Cardiac septum (tissue), 1 donor: ENCODE measurements at regions of chr2 and their contacts with region 1.

Region 1: GRCh38 chr2:24409700-24410556 is 49.6 kb upstream of the ITSN2 start:
- DNase-seq: no peak

Region 2: GRCh38 chr2:23720705-23721453 is 689.0 kb before region 1 on chr2:
- intact Hi-C with region 1: no loop called
- DNase-seq: no peak

Region 3: DNA sequence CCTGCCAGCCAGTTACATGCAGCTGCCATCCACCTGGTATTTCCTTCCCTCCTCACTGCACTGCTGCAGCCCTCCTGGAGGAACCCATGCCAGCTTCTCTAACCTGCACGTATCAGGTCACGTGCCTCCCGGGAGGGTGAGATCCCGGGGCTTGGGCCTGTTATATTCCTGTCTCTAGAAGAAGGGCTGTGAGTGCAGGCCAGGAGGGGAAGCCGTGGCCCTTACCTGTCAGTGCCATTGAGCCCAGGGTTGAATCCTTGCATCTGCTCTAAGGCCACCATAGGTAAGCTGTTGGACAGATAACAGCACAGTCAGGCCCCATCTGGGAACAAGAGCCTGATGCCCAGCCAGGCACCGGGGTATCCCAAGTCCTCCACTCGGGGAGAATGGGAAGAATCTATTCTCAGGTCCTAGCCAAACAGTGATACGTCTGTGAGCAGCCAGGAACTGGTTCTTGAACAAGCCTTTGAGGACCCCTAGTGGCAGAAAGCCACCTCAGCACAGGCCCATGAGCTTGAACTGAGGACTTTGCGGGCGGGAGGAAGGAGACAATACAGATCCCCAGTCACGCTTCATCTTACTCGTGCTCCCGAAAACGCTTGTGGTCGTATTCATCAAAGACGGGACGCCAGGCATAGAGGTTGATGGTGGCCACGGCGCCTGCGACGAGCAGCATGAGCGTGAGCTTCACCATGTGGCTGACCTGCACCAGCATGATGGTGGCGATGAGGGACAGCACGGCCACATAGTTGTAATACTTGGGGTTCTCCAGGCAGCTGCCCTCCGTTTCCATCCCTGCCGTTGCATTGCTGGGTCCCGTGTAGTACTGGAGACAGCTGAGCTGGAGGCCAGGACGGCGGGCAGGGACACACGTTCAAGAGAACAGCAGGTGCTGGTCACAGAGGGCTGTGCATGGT is 417.7 kb after region 1 on chr2:
- intact Hi-C with region 1: loop called (anchors 1 kb)
- DNase-seq: peak; percentile 89

Region 4: DNA sequence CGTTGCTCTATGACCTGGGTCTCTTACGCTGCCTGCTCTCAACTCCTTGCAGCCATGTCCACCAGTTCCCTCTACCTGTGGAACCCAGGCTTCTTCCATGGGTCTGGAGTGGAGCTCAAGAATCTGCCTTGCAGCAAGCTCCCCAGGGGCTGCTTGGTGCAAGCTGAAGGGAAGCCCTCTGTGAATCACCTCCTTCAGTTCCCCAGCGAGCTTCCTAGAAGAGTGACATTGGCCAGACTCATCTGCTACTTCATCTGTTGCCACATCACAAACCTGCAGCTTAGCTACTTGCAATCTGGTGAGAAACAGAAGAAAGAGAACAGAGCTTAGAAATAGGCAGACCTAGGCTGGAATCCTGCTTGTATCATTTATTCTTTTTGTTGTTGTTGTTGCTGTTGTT is 622.2 kb after region 1 on chr2:
- intact Hi-C with region 1: no loop called
- DNase-seq: peak; percentile 68

Region 5: DNA sequence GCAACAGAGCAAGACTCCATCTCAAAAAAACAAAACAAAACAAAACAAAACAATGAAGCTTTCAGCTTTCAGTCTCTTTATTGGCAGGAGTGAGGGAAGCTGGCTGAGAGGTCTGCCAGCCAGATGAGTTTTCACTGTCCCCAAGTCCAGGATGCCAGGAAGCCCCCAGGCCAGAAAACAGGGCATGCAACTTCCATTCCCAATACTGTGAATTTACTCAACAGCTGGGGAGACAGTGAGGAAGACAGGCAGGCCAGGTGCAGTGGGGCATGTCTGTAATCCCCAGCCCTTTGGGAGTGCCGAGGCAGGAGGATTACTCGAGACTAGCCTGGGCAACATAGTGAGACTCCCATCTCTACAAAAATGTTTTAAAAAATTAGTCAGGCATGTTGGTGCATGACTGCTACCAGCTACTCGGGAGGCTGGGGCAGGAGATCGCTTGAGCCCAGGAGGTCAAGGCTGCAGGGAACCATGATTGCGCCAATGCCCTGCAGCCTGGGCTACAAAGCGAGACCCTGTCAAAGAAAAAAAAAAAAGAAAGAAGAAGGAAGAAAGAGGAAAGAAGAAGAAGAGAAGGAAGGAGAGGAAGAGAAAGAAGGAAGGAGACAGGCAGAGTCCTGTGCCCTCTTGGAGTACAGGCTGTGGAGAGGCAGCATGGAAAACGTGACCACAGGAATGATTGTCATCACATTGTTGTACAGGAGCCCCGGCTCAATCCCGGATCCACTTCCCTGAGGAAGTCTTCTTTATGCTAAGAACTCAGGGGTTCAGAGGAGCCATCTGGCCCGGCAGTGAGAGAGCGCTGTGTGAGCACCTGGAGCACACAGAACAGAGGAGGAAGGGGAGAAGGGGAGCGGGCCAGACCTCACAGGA is 787.6 kb after region 1 on chr2:
- intact Hi-C with region 1: loop called (anchors 5 kb)
- DNase-seq: no peak